Mammary epithelial cell (primary cell): ENCODE measurements at regions of chr7 and their contacts with region 1.

Region 1: DNA sequence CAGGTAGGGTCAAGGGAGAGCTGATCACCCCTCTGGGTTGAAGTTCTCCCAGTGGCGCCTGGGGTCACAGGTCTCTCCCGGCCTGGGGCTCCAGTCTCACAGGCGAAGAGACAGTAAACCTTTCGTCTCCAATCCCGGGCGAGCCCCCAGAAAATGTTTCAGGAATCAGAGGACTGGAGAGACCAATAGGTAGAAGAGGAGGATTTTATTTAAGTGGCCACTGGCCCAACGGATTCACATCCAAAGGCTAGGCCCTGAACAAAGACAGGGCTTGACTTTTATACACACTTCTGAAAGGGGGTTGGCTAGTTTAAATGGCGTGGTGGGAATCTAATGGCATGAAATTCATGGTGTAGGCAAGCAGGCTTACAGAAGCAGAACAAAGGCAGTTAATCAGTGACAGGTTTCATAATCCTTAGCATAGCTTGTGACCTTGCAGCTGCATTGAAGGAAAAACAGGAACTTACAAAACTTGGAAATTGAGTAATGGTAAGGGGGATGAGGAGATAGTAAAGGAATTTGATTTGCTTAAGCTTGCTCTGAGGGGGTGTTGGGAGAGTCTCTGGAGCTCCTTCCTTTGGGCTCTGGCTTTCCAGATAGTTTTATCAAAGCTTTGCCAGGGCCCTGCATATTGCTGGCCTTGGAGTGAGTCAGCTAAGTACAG is 105.5 kb downstream of the TRIM24 start:
- DNase-seq: peak; percentile 32
- H3K4me3 ChIP-seq: no peak overlapping the region
- H3K27ac ChIP-seq: no peak overlapping the region
- H3K4me1 ChIP-seq: no peaks in the 10 kb centered on the region
- H3K27me3 ChIP-seq: no peaks in the 10 kb centered on the region
- CTCF ChIP-seq: no peak

Region 2: DNA sequence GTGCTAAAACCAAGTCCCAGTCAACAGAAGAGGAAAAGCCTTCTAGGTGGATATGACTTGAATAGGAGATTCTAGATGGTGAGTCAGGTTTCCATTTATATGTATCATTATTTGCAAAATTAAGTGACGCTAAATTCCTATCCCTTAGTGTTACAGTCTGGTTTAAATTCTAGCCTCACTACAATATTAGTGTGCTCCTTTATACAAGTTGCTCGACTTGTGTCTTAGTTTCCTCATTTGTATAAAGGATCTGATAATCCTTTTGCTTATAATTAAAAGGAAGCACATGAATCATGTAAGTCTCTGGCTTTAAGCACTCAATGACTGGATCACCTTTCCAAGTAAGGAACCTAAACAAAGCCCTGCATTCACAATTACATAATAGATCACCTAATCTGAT is 29.9 kb after region 1 on chr7:
- CTCF ChIA-PET with region 1: no interaction called
- dilution Hi-C with region 1: no loop called
- in situ Hi-C with region 1: no loop called
- intact Hi-C with region 1: loop called (anchors 1 kb)
- DNase-seq: no peak
- H3K4me3 ChIP-seq: no peak overlapping the region
- H3K27ac ChIP-seq: no peak overlapping the region
- H3K4me1 ChIP-seq: no peaks in the 10 kb centered on the region
- H3K27me3 ChIP-seq: no peaks in the 10 kb centered on the region
- CTCF ChIP-seq: no peak